Natural killer cell (primary cell): ENCODE measurements at regions of chr12 and their contacts with region 1.

Region 1: GRCh38 chr12:38484821-38485472 is 168.4 kb downstream of the ALG10B start:
- DNase-seq: no peak
- ATAC-seq: no peak
- H3K4me3 ChIP-seq: no peak overlapping the region
- H3K4me3 Mint-ChIP-seq: no peak overlapping the region
- H3K27ac ChIP-seq: no peak overlapping the region
- H3K27ac Mint-ChIP-seq: no peak overlapping the region
- H3K4me1 ChIP-seq: no peaks in the 10 kb centered on the region
- H3K4me1 Mint-ChIP-seq: no peaks in the 10 kb centered on the region
- H3K27me3 ChIP-seq: no peaks in the 10 kb centered on the region
- H3K27me3 Mint-ChIP-seq: no peaks in the 10 kb centered on the region
- CTCF ChIP-seq: no peak

Region 2: GRCh38 chr12:38432381-38432780 is 52.6 kb before region 1 on chr12:
- intact Hi-C with region 1: loop called (anchors 10 kb)
- DNase-seq: no peak
- ATAC-seq: no peak
- H3K4me3 ChIP-seq: no peak overlapping the region
- H3K4me3 Mint-ChIP-seq: no peak overlapping the region
- H3K27ac ChIP-seq: no peak overlapping the region
- H3K27ac Mint-ChIP-seq: no peak overlapping the region
- H3K4me1 ChIP-seq: no peaks in the 10 kb centered on the region
- H3K4me1 Mint-ChIP-seq: no peaks in the 10 kb centered on the region
- H3K27me3 ChIP-seq: no peaks in the 10 kb centered on the region
- H3K27me3 Mint-ChIP-seq: no peaks in the 10 kb centered on the region
- CTCF ChIP-seq: no peak

Region 3: DNA sequence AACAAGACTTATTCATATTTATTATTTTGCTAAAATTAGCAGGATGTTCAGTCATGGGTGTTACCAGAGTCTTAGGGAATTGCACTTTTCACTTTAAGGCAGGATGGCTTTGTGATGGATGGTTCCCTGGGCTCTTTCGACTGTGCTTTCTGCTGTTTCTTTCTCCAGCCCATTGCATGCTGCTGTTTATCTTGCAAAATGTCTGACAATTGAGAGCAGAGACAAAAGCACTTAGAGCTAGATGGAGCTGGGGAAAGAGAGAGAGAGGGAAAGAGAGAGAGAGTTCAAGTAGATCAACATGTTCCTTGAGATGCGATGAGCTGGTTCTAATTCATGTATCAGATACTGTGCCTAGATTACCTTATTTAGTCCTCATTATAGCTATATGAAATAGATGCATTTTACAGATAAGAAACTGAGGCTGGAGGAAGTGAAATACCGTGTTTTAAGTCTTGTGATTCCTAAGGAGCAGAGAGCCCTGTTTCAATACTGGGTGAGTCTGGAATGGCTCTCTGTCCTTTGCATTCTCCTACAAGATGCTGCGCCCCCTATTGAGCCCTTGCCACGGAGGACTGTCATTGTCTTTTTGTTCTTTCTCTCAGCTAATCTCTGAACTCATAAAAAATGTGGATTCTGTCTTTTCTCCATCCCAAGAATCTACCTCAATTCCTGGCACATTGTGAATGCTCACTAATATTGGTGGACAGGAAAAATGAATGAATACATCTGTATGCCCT is 59.6 kb after region 1 on chr12:
- intact Hi-C with region 1: no loop called
- DNase-seq: no peak
- ATAC-seq: no peak
- H3K4me3 ChIP-seq: no peak overlapping the region
- H3K4me3 Mint-ChIP-seq: no peak overlapping the region
- H3K27ac ChIP-seq: no peak overlapping the region
- H3K27ac Mint-ChIP-seq: no peak overlapping the region
- H3K4me1 ChIP-seq: no peaks in the 10 kb centered on the region
- H3K4me1 Mint-ChIP-seq: no peaks in the 10 kb centered on the region
- H3K27me3 ChIP-seq: no peaks in the 10 kb centered on the region
- H3K27me3 Mint-ChIP-seq: no peaks in the 10 kb centered on the region
- CTCF ChIP-seq: no peak

Region 4: DNA sequence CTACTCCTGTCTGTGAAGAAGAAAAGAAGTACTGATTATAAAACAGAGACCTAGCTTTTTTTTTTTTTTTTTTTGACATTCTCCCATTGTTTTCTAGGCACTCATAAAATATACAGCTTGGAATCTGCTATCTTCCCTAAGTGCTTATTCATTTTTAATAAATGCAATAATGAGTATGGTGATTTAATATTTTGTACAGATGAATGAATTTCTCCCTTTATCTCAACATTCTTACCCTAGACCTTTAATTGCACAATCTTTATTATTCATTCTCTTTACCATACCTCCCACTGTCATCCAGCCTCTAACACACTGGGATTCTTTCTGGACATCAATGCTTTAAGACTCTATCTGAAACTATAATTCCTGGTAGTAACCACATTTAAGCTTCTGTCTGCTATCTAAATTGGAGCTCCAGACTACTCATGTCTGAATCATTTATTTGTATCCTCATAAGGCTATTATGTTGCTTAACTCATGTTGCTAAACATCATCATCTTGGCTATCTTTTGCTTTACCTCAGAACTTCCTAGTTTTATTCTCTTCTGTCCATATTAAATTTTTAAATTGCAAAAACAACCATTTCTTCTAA is 101.8 kb after region 1 on chr12:
- intact Hi-C with region 1: no loop called
- DNase-seq: no peak
- ATAC-seq: no peak
- H3K4me3 ChIP-seq: no peak overlapping the region
- H3K4me3 Mint-ChIP-seq: no peak overlapping the region
- H3K27ac ChIP-seq: no peak overlapping the region
- H3K27ac Mint-ChIP-seq: no peak overlapping the region
- H3K4me1 ChIP-seq: no peaks in the 10 kb centered on the region
- H3K4me1 Mint-ChIP-seq: no peaks in the 10 kb centered on the region
- H3K27me3 ChIP-seq: no peaks in the 10 kb centered on the region
- H3K27me3 Mint-ChIP-seq: no peaks in the 10 kb centered on the region
- CTCF ChIP-seq: no peak